Activated naive CD4-positive, alpha-beta T cell treated with anti-CD3 and anti-CD28 coated beads for 36 hours (primary cell): ENCODE measurements at regions of chr15 and their contacts with region 1.

Region 1: DNA sequence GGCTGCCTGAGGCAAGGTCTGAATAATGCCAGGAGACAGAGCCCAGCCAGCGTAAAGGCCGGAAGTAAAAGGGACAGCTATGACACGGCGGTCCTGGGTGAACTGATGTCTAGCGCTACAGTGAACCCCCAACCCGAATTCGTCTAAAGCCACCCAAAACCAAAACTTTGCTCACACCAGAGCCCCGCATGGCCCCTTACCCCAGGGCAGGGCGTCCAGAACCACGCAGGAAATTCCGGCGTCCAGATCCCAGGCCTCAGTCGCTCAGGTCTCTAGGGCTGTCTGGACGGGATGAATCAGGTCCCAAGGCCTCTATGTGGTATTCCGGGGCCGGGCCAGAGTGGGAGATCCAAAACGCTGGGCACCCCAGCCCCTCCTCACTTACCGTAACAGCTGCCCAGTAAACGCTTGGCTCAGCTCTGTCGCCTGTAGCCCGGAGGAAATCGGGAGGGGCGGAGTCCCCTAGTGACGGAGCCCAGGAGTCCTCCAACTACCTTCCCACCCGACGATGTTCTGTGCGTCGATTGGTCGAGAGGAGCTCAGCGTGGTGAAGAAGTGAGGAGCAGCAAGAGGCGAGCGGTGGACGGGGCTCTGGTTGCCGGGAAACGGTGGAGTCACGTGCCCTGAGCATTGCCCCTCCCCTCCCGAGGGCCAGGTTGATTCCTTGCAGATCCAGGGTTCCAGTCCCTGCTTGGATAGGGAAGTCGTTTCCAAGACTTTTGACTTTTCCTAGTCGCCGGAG is at the start of gene CCDC32:
- DNase-seq: peak; percentile 98
- H3K4me3 Mint-ChIP-seq: peak within 1 kb of the TSS; percentile 96
- H3K27ac Mint-ChIP-seq: peak within 1 kb of the TSS; percentile 90
- H3K4me1 Mint-ChIP-seq: peaks cover 45% of the 10 kb centered on the region
- H3K27me3 Mint-ChIP-seq: no peaks in the 10 kb centered on the region
- total RNA-seq, gene CCDC32: 25.4 to 25.8 TPM

Region 2: DNA sequence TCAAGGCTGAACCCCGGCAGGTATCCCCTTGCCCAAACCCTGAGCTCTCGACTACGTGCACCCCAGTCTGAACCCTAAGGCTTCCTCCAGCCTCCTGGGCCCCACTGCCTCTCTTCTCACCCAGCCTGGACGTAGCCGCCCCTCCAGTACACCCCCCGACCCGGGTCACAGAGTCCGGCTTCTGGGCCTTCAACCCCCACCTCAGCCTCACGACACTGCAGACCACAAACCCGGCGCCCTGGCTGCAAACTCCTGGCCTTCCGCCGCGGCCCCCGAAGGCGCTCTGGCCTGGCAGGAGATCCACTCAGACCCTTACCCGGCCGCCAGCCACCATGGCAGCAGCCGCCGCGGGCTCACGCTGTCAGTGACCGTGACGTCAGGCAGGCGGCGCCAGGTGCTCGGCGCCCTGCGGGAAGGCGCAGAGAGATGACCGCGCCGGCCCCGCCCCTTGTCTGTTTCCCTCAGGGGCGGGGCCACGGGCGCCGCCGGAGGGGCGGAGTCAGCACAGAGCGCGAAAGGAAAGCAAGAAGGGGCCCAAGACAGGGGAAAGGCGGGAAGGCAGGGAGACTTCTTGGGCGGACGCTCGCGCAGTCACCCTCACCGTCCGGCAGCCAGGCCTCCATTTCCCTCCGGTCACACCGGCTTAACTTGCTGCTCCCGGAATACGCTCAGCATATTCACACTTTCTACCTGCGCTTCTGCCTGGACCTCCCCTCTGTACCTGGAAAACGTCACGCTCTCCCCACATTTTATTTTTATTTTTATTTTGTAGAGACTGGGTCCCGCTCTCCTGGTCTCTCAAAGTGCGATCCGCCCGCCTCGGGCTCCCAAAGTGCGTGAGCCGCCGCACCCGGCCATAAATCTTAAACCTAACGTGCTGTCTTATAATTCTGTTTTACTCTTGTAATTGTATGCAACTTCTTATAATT is 190.4 kb after region 1 on chr15 and contains the start of gene RMDN3:
- CTCF ChIA-PET with region 1: interaction called, 5 read pairs
- intact Hi-C with region 1: loop called (anchors 1 kb)
- DNase-seq: peak; percentile 95
- H3K4me3 Mint-ChIP-seq: peak within 1 kb of the TSS; percentile 94
- H3K27ac Mint-ChIP-seq: peak within 1 kb of the TSS; percentile 98
- H3K4me1 Mint-ChIP-seq: peaks cover 25% of the 10 kb centered on the region
- H3K27me3 Mint-ChIP-seq: no peaks in the 10 kb centered on the region
- total RNA-seq, gene RMDN3: 17.8 to 19.2 TPM

Region 3: GRCh38 chr15:41116116-41116871 is 551.5 kb after region 1 on chr15 and contains the start of gene INO80:
- CTCF ChIA-PET with region 1: no interaction called
- intact Hi-C with region 1: loop called (anchors 5 kb)
- DNase-seq: peak; percentile 99
- H3K4me3 Mint-ChIP-seq: peak within 1 kb of the TSS; percentile 88
- H3K27ac Mint-ChIP-seq: peak within 1 kb of the TSS; percentile 96
- H3K4me1 Mint-ChIP-seq: peaks cover 21% of the 10 kb centered on the region
- H3K27me3 Mint-ChIP-seq: no peaks in the 10 kb centered on the region
- total RNA-seq, gene INO80: 14.0 to 16.8 TPM